Activated naive CD4-positive, alpha-beta T cell treated with anti-CD3 and anti-CD28 coated beads for 36 hours (primary cell): ENCODE measurements at regions of chr5 and their contacts with region 1.

Region 1: GRCh38 chr5:76771705-76772405 is 47.0 kb upstream of the F2RL1 start:
- DNase-seq: no peak
- H3K4me3 Mint-ChIP-seq: no peak overlapping the region
- H3K27ac Mint-ChIP-seq: no peak overlapping the region
- H3K4me1 Mint-ChIP-seq: peaks cover 2% of the 10 kb centered on the region
- H3K27me3 Mint-ChIP-seq: no peaks in the 10 kb centered on the region

Region 2: GRCh38 chr5:75847561-75848021 is 924.3 kb before region 1 on chr5:
- CTCF ChIA-PET with region 1: no interaction called
- intact Hi-C with region 1: no loop called
- DNase-seq: no peak
- H3K4me3 Mint-ChIP-seq: no peak overlapping the region
- H3K27ac Mint-ChIP-seq: no peak overlapping the region
- H3K4me1 Mint-ChIP-seq: no peaks in the 10 kb centered on the region
- H3K27me3 Mint-ChIP-seq: peaks cover 14% of the 10 kb centered on the region

Region 3: GRCh38 chr5:76256116-76256889 is 515.6 kb before region 1 on chr5:
- CTCF ChIA-PET with region 1: no interaction called
- intact Hi-C with region 1: loop called (anchors 5 kb)
- DNase-seq: peak; percentile 79
- H3K4me3 Mint-ChIP-seq: no peak overlapping the region
- H3K27ac Mint-ChIP-seq: no peak overlapping the region
- H3K4me1 Mint-ChIP-seq: peaks cover 2% of the 10 kb centered on the region
- H3K27me3 Mint-ChIP-seq: peaks cover 3% of the 10 kb centered on the region

Region 4: GRCh38 chr5:76601470-76601869 is 170.4 kb before region 1 on chr5:
- CTCF ChIA-PET with region 1: interaction called, 94 read pairs
- intact Hi-C with region 1: loop called (anchors 1 kb)
- DNase-seq: peak; percentile 41
- H3K4me3 Mint-ChIP-seq: no peak overlapping the region
- H3K27ac Mint-ChIP-seq: no peak overlapping the region
- H3K4me1 Mint-ChIP-seq: peaks cover 2% of the 10 kb centered on the region
- H3K27me3 Mint-ChIP-seq: no peaks in the 10 kb centered on the region

Region 5: GRCh38 chr5:76615759-76616158 is 156.1 kb before region 1 on chr5:
- CTCF ChIA-PET with region 1: interaction called, 10 read pairs
- intact Hi-C with region 1: no loop called
- DNase-seq: no peak
- H3K4me3 Mint-ChIP-seq: no peak overlapping the region
- H3K27ac Mint-ChIP-seq: no peak overlapping the region
- H3K4me1 Mint-ChIP-seq: no peaks in the 10 kb centered on the region
- H3K27me3 Mint-ChIP-seq: no peaks in the 10 kb centered on the region

Region 6: DNA sequence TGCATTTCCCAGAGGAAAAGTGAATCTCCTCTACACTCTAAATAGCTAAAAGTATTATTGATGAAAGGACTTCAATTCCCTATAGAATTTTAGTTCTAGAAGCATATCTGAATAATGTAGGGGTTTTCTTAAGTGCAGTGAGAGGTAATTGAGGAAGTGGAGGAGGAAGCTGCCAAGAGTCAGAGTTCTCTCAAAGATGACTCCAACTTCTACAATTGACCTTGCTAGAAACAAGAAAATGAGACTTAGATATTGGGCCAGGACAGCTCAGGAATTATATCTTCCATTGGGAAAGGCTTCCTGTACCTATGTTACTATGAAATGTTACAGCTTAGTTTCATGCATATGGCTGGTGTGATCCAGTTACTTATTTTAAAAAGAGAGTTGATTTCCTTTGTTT is 66.3 kb before region 1 on chr5:
- CTCF ChIA-PET with region 1: interaction called, 10 read pairs
- intact Hi-C with region 1: no loop called
- DNase-seq: no peak
- H3K4me3 Mint-ChIP-seq: no peak overlapping the region
- H3K27ac Mint-ChIP-seq: no peak overlapping the region
- H3K4me1 Mint-ChIP-seq: peaks cover 1% of the 10 kb centered on the region
- H3K27me3 Mint-ChIP-seq: no peaks in the 10 kb centered on the region

Region 7: DNA sequence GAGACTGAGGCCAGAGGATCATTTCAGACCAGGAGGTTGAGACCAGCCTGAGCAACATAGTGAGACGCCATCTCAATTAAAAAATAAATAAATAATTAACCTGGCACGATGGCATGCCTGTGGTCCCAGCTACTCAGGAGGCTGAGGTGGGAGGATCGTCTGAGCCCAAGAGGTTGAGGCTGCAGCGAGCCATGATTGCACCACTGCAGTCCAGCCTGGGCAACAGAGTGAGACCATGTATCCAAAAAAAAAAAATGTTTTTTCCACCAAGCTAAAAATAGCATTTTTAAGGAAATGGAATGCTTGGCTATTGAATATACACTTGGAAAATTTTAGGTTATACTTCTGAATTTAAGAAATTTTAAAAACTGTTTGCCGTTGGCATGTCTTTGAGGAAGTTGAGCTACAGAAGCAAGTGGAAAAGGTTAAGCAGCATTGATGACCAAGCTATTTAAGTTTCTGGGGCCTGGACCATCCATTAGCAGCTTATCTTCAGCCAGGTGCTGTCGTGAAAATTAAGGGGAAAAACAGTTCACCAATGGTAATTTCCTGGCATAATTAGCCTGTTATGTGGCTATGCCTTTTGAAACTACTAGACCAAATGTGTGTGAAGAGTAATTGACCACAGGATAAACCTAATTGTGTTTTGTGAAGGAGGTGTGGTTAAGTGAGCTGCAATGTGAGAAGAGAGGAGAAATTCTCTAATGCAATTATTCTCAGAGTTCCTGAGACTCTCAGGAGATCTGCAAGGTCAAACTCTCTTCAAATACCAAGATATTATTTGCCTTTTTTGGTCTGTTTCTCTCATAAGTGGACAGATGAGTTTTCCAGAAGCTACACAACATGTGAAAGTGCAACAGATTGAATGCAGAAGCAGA is 34.9 kb before region 1 on chr5:
- CTCF ChIA-PET with region 1: interaction called, 17 read pairs
- intact Hi-C with region 1: no loop called
- DNase-seq: no peak
- H3K4me3 Mint-ChIP-seq: no peak overlapping the region
- H3K27ac Mint-ChIP-seq: no peak overlapping the region
- H3K4me1 Mint-ChIP-seq: peaks cover 19% of the 10 kb centered on the region
- H3K27me3 Mint-ChIP-seq: no peaks in the 10 kb centered on the region